Activated T-helper 2 cell treated with anti-CD3 and anti-CD28 coated beads, Interferon-gamma antibody, Interleukin-2, Interleukin-4, amounts not matched to agents 10 μg/mL and 5 μg/mL and 100 μg/mL, durations not matched to agents 14 hours and 24 hours and 36 hours (primary cell): ENCODE measurements at regions of chr18 and their contacts with region 1.

Region 1: DNA sequence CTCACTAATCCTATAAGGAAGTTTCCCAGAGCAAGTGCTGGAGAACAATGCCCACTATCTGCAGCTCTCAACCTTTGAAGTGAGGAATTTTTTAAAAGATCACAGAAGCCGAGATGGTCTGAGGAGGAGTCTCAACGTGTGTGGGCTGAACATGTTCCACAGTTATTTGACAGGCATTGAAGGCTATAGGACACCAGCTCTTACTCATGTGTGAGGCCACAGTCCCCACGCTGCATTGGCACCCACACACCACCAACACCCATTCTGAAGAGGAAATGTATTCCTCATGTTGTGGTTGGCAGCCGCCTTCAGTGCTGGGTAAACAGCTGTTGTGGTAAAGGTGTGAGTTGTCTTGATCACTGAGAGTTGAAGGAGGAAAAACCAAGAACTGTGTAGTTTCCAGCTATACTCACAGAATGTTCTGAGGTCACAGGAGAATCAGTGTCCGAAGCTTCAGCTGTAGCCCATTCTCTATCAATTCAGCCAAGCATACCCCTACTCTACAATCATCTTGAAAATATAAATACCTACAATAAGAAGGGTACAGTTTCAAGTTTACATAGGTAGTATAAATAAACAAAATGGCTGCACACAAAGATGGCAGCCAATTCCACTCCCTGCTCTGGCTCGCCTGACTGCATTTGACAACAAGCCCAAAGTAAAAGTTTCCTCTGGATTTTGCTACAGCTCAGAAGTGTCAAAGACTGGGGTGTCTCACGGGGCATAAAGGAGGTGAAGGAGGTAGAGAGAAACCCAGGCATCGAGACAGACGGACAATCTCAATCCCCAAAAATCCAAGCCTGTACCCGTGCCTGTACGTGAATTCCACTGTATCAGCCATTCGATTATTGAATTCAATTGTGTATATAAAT is 12.1 kb downstream of the CD226 start:
- DNase-seq: peak; percentile 71
- H3K4me3 Mint-ChIP-seq: no peak overlapping the region
- H3K27ac Mint-ChIP-seq: no peak overlapping the region
- H3K4me1 Mint-ChIP-seq: peaks cover 28% of the 10 kb centered on the region
- H3K27me3 Mint-ChIP-seq: no peaks in the 10 kb centered on the region

Region 2: GRCh38 chr18:69885841-69886531 is 49.6 kb before region 1 on chr18:
- intact Hi-C with region 1: loop called (anchors 1 kb)
- DNase-seq: peak; percentile 36
- H3K4me3 Mint-ChIP-seq: peak overlapping the region; percentile 76
- H3K27ac Mint-ChIP-seq: peak overlapping the region; percentile 100
- H3K4me1 Mint-ChIP-seq: peaks cover 75% of the 10 kb centered on the region
- H3K27me3 Mint-ChIP-seq: no peaks in the 10 kb centered on the region

Region 3: DNA sequence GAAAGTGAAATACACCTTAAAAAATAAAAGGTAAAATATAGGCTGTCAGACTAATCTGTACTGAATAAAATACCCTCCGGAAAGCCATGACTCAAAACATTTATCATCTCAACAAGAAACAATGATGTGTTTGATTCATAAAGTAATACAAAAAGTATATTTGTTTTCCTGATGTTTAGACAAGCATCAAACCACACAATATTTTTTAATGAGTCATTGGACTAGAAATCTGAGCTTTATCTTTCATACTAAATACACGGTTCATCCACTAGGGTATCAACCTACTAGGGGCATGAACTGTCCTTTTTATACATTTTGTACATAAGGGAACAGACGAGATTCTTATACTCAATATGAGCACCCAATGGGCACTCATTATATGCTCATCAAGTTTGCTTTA is 19.1 kb before region 1 on chr18:
- intact Hi-C with region 1: loop called (anchors 2 kb)
- DNase-seq: no peak
- H3K4me3 Mint-ChIP-seq: no peak overlapping the region
- H3K27ac Mint-ChIP-seq: no peak overlapping the region
- H3K4me1 Mint-ChIP-seq: peaks cover 42% of the 10 kb centered on the region
- H3K27me3 Mint-ChIP-seq: no peaks in the 10 kb centered on the region

Region 4: GRCh38 chr18:69948919-69949537 is 13.5 kb after region 1 on chr18:
- intact Hi-C with region 1: loop called (anchors 1 kb)
- DNase-seq: no peak
- H3K4me3 Mint-ChIP-seq: no peak overlapping the region
- H3K27ac Mint-ChIP-seq: no peak overlapping the region
- H3K4me1 Mint-ChIP-seq: peaks cover 54% of the 10 kb centered on the region
- H3K27me3 Mint-ChIP-seq: no peaks in the 10 kb centered on the region

Region 5: GRCh38 chr18:69978732-69979715 is 43.5 kb after region 1 on chr18:
- intact Hi-C with region 1: loop called (anchors 2 kb)
- DNase-seq: no peak
- H3K4me3 Mint-ChIP-seq: no peak overlapping the region
- H3K27ac Mint-ChIP-seq: peak overlapping the region; percentile 1
- H3K4me1 Mint-ChIP-seq: peaks cover 36% of the 10 kb centered on the region
- H3K27me3 Mint-ChIP-seq: no peaks in the 10 kb centered on the region